ENCODE measurements at regions of chr14 and their contacts with region 1.

Region 1: DNA sequence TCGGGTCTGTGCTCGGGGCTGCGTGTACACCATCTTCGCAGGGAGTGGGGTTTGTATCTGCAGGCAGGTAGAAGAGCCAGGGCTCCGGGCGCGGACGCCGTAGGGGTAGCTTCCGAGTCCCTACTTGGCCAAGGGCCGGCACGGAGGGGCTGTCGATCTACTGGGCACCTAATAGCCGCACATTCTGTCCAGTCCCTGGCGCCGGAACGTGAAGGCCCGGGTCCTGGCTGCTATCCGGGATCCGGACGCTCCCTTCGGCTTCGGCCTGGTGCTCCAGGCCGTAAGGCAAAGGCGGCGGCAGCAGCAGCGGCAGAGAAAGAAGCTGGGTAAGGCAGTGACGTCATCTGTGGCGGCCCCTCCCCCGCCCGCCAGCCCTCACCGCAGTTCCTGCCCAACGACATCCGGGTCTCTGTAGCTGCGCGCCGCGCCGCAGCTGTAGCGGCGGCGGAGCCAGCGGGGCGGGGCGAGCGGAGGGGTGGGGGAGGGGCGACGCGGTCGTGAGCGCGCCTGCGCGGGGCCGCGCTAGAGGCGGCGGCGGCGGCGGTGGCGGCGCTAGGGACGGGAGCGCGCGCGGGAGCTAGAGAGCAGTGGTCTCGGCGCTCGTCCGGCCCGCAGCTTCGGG is at the start of gene PPM1A:
- DNase-seq: peak; percentile 100
- ATAC-seq: peak; percentile 70
- H3K4me3 ChIP-seq: peak within 1 kb of the TSS; percentile 69
- H3K27ac ChIP-seq: peak within 1 kb of the TSS; percentile 87
- H3K4me1 ChIP-seq: peaks cover 30% of the 10 kb centered on the region
- H3K27me3 ChIP-seq: no peaks in the 10 kb centered on the region
- CTCF ChIP-seq: no peak
- total RNA-seq, gene PPM1A: 69.3 and 69.4 TPM in 2 replicates

Region 2: GRCh38 chr14:59803052-59803540 is 445.7 kb before region 1 on chr14:
- CTCF ChIA-PET with region 1: no interaction called
- POLR2A ChIA-PET with region 1: no interaction called
- intact Hi-C with region 1: no loop called
- DNase-seq: no peak
- ATAC-seq: no peak
- H3K4me3 ChIP-seq: no peak overlapping the region
- H3K27ac ChIP-seq: no peak overlapping the region
- H3K4me1 ChIP-seq: no peaks in the 10 kb centered on the region
- H3K27me3 ChIP-seq: peaks cover 67% of the 10 kb centered on the region
- CTCF ChIP-seq: no peak

Region 3: DNA sequence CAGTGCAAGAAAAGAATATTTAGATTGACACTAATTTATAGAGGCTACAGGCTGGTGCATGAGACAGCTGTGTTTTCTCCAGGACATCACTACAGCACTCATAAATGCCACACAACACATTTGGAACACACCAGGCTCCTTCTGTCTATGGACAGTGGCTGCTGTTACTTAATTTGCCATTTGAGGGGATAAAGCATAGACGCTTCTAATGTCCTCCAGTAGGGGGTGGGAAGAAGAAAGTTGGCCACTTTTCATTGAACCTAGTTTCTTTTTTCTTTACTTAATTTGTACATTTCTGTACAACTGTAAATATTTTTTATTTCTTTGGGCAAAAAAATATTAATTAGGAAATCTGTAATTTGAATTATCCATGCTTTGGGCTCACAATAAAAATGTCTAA is 365.9 kb before region 1 on chr14:
- CTCF ChIA-PET with region 1: no interaction called
- POLR2A ChIA-PET with region 1: no interaction called
- intact Hi-C with region 1: no loop called
- DNase-seq: peak; percentile 58
- ATAC-seq: peak; percentile 80
- H3K4me3 ChIP-seq: no peak overlapping the region
- H3K27ac ChIP-seq: no peak overlapping the region
- H3K4me1 ChIP-seq: no peaks in the 10 kb centered on the region
- H3K27me3 ChIP-seq: peaks cover 50% of the 10 kb centered on the region
- CTCF ChIP-seq: peak; percentile 88

Region 4: DNA sequence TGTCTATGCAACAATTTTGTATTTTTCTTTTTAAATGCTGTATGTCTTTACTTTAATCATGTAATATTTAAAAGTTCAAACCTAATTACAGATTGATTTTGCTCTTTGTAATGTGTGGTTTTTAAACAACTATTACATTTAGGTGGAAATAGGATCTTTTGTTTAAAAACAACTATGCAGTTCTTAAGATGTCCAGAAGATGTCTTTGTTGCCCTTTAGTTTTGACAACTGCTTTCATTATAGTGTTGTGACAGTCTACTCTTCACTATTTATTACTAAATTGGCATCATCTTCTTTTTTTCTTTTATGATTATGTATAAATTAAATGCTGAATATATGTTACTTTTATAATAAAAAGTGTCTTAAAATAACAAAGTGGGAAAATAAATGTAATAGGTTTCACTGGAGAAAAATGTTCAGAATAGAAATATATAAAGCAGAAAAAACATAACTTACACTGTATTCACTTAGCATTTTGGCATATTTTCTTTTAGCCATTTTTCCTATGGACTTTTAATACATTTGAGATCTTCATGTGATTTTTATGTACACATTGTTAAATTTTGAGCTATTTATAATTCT is 184.2 kb before region 1 on chr14:
- CTCF ChIA-PET with region 1: no interaction called
- POLR2A ChIA-PET with region 1: interaction called, 4 read pairs
- intact Hi-C with region 1: loop called (anchors 10 kb)
- DNase-seq: peak; percentile 87
- ATAC-seq: peak; percentile 49
- H3K4me3 ChIP-seq: no peak overlapping the region
- H3K27ac ChIP-seq: no peak overlapping the region
- H3K4me1 ChIP-seq: peaks cover 19% of the 10 kb centered on the region
- H3K27me3 ChIP-seq: no peaks in the 10 kb centered on the region
- CTCF ChIP-seq: peak; percentile 98

Region 5: GRCh38 chr14:60151715-60152114 is 97.1 kb before region 1 on chr14:
- CTCF ChIA-PET with region 1: interaction called, 13 read pairs
- POLR2A ChIA-PET with region 1: no interaction called
- intact Hi-C with region 1: no loop called
- DNase-seq: peak; percentile 100
- ATAC-seq: peak; percentile 100
- H3K4me3 ChIP-seq: no peak overlapping the region
- H3K27ac ChIP-seq: peak overlapping the region; percentile 55
- H3K4me1 ChIP-seq: peaks cover 24% of the 10 kb centered on the region
- H3K27me3 ChIP-seq: no peaks in the 10 kb centered on the region
- CTCF ChIP-seq: no peak

Region 6: GRCh38 chr14:60195179-60195810 is 53.5 kb before region 1 on chr14:
- CTCF ChIA-PET with region 1: no interaction called
- POLR2A ChIA-PET with region 1: interaction called, 11 read pairs
- intact Hi-C with region 1: loop called (anchors 5 kb)
- DNase-seq: no peak
- ATAC-seq: peak; percentile 35
- H3K4me3 ChIP-seq: no peak overlapping the region
- H3K27ac ChIP-seq: no peak overlapping the region
- H3K4me1 ChIP-seq: peaks cover 26% of the 10 kb centered on the region
- H3K27me3 ChIP-seq: no peaks in the 10 kb centered on the region
- CTCF ChIP-seq: peak; percentile 49

Region 7: GRCh38 chr14:60266021-60266937 is 17.5 kb after region 1 on chr14:
- CTCF ChIA-PET with region 1: interaction called, 7 read pairs
- POLR2A ChIA-PET with region 1: interaction called, 4 read pairs
- intact Hi-C with region 1: loop called (anchors 2 kb)
- DNase-seq: peak; percentile 82
- ATAC-seq: peak; percentile 94
- H3K4me3 ChIP-seq: no peak overlapping the region
- H3K27ac ChIP-seq: no peak overlapping the region
- H3K4me1 ChIP-seq: peaks cover 5% of the 10 kb centered on the region; the same call in 1 of the 2 replicates
- H3K27me3 ChIP-seq: no peaks in the 10 kb centered on the region
- CTCF ChIP-seq: peak; percentile 100

Region 8: DNA sequence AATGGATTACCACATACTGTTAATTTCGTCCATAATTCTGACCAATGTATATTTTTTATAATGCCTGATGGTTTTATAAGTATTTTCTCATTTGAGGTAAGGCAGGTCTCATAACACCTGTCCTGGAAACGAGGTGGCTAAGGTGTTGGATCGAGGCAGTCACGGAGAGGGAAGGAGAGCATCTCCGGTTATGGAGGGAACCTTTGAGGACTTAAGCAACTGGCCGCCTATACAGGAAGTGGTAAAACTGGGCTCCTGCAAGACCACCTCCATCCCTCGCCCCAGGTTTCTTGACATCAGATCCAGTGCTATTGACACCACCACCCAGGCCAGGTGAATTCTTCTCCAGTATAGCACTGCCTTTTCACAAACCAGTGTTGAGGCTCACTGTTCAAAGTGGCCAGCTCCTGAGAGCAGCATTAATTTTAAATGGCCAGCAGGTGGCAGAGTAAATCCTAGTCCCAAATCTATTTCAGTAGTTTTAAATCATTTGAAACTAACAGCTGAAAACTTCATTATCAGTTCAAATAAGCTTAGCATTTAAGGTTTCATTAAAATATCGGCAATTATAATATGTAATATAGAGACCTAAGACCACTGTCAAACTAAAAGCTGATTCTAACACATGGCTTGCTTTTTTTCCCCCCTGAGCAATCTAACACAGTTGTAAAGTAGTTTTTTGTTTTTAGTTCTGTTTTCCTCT is 101.0 kb after region 1 on chr14:
- CTCF ChIA-PET with region 1: interaction called, 10 read pairs
- POLR2A ChIA-PET with region 1: interaction called, 3 read pairs
- intact Hi-C with region 1: no loop called
- DNase-seq: peak; percentile 90
- ATAC-seq: peak; percentile 82
- H3K4me3 ChIP-seq: no peak overlapping the region
- H3K27ac ChIP-seq: no peak overlapping the region
- H3K4me1 ChIP-seq: no peaks in the 10 kb centered on the region
- H3K27me3 ChIP-seq: peaks cover 15% of the 10 kb centered on the region
- CTCF ChIP-seq: peak; percentile 99